Endothelial cell of umbilical vein (primary cell): ENCODE measurements at regions of chr5 and their contacts with region 1.

Region 1: DNA sequence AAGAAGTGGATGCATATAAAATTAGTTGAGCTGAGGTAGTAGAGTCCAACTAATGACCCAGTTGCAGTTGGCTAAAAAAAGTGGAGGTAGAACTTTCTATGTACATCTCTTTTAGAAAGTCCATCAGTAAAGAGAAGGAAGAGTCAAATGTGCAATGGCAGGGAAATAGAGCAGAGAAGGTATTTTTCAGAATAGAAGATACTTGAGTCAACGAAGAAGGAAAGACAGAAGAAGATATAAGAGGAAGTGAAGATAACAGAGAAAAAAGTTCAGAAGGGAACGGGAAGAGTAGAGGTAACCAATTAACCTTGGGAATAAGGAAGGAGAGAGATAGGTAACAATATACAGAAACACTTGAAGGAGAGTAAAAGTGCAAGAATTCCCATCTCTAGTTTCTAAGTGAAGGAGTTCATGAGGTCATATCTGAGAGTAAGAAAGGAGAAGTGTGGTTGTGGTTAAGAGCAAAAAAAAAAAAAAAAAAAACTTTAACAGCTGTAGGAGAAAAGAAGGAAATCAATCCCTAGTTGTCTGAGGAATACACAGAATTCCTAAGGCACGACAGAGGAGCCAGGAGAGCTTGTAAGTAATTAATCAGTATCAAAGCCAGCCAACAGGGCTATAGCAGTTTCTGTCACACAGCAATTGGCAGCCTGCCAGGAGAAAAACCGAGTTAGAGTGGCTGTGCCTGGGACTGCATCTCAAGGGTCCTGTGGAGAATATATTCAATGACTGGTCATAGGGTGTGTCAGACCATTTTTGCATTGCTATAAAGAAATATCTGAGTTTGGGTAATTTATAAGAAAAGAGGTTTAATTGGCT is 61.0 kb downstream of the ARL15 start:
- DNase-seq: no peak
- H3K4me3 ChIP-seq: no peak overlapping the region
- H3K27ac ChIP-seq: no peak overlapping the region
- H3K4me1 ChIP-seq: peaks cover 6% of the 10 kb centered on the region
- H3K27me3 ChIP-seq: no peaks in the 10 kb centered on the region
- CTCF ChIP-seq: no peak
- POLR2A ChIP-seq: no peak

Region 2: GRCh38 chr5:54874373-54874921 is 625.0 kb after region 1 on chr5:
- CTCF ChIA-PET with region 1: no interaction called
- POLR2A ChIA-PET with region 1: no interaction called
- dilution Hi-C with region 1: no loop called
- intact Hi-C with region 1: loop called (anchors 5 kb)
- DNase-seq: peak; percentile 92
- H3K4me3 ChIP-seq: no peak overlapping the region
- H3K27ac ChIP-seq: no peak overlapping the region
- H3K4me1 ChIP-seq: peaks cover 3% of the 10 kb centered on the region
- H3K27me3 ChIP-seq: peaks cover 0 to 4% of the 10 kb centered on the region in 2 experiments
- CTCF ChIP-seq: no peak
- POLR2A ChIP-seq: no peak